Prostate gland (tissue), 2 donors: ENCODE measurements at regions of chr11 and their contacts with region 1.

Region 1: DNA sequence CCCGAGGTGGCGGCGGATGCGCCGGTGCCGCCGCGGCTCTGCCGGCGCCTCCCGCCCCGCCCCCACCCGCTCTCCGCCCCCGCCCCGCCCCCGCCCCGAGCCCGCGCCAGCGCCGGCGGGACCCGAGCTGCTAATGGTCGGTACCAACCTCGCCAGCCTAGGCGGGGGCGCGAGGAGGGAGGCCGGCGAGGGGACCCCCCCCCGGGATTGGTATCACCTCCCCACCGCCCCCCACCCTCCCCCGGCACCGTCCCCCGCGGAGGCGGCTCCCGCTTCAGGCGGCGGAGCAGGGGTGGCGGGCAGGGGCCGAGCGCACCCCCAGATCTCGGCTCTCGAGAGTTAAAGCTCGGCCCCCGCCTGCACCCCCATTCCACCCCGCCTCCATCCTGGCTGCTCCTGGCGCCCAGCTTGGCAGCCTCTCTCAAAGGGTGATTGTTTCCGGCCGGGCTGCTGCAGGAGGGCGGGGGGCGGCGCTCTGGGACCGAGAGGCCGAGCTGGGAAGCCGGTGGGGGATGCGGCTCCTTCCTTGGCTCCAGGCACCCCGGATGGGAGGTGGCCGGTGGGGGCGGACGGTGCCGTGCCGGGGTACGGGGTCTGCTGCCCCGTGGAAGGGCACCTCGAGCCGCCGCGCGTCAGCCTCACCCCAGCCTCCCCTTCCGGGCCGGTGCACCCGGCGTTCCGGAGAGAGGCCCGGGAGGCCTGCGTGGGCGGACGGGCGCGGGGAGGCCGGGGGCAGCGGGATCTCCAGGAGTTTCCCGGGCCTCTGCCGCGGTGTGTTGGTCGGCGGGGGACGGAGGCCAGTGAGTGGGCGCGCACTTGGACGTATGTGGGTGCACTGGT is at the start of gene B3GAT1:
- DNase-seq: no peak
- H3K4me3 ChIP-seq: peak within 1 kb of the TSS; percentile 35 to 43
- H3K27ac ChIP-seq: no peak within 1 kb of the TSS
- H3K4me1 ChIP-seq: no peaks in the 10 kb centered on the region
- H3K27me3 ChIP-seq: peaks cover 9% of the 10 kb centered on the region
- CTCF ChIP-seq: no peak
- POLR2A ChIP-seq: no peak
- total RNA-seq, gene B3GAT1: 3.9 to 4.9 TPM

Region 2: GRCh38 chr11:134802121-134802520 is 389.7 kb after region 1 on chr11:
- intact Hi-C with region 1: loop called (anchors 10 kb)
- DNase-seq: no peak
- H3K4me3 ChIP-seq: no peak overlapping the region
- H3K27ac ChIP-seq: no peak overlapping the region
- H3K4me1 ChIP-seq: no peaks in the 10 kb centered on the region
- H3K27me3 ChIP-seq: peaks cover 5% of the 10 kb centered on the region
- CTCF ChIP-seq: no peak
- POLR2A ChIP-seq: no peak

Region 3: GRCh38 chr11:134905517-134905916 is 493.1 kb after region 1 on chr11:
- intact Hi-C with region 1: no loop called
- DNase-seq: no peak
- H3K4me3 ChIP-seq: no peak overlapping the region
- H3K27ac ChIP-seq: no peak overlapping the region
- H3K4me1 ChIP-seq: no peaks in the 10 kb centered on the region
- H3K27me3 ChIP-seq: peaks cover 4% of the 10 kb centered on the region
- CTCF ChIP-seq: no peak
- POLR2A ChIP-seq: no peak